A549 (cell line): ENCODE measurements at regions of chr2 and their contacts with region 1.

Region 1: GRCh38 chr2:232668805-232669444 is 28.2 kb upstream of the GIGYF2 start:
- DNase-seq: peak in 1 of 2 experiments; percentile 32
- ATAC-seq: peak; percentile 64 to 77; a peak in 5 of 6 replicates
- H3K4me3 ChIP-seq: no peak overlapping the region
- H3K27ac ChIP-seq: no peak overlapping the region
- H3K4me1 ChIP-seq: peaks cover 10% of the 10 kb centered on the region; the same call in 2 of the 3 replicates
- CTCF ChIP-seq: peak; percentile 28; the same call in 2 of the 3 replicates
- EP300 ChIP-seq: no peak
- POLR2A ChIP-seq: no peak
- RAD21 ChIP-seq: peak; percentile 33 to 49; a peak in 4 of 5 replicates

Region 2: DNA sequence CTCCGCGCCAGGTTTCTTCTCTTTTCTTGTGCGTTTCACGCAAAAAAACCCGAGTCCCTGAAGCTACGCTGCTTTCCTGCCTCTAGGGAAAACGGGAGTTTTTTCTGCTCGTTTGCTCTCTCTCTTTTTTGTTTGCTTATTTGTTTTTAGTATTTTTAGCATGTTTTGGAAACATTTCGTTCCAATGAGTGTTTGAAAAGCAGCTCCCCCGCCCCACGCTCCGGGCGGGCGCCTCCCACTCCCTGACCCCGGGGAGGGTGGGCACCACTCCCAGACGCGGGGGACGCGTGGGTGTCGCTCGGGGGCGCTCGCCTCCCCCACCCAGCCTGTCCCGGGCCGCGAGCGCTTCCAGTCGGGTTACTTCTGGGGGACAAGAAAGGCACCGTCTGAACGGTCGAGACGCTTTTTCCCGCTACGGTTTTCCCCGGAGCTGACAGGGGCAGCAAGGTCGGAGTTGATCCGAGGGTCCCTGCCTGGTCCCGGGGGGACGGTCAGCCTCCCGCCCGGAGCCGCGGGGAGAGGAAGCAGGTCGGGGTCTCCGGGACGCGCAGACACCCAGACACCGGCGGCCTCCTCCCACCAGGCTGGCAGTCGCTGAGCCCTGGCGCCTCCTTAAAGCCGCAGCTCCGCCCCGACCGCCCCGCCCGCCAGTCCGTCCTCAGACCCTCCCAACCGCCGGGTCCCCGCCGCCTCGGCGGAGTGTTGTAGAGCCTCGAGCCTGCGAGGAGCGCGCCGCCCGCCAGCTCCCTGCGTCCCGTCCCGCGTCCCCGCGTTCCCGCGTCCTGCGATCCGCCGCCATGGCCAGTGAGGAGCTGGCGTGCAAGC is 35.8 kb before region 1 on chr2 and contains the start of gene EFHD1:
- CTCF ChIA-PET with region 1: interaction called, 14 read pairs
- POLR2A ChIA-PET with region 1: no interaction called
- DNase-seq: peak; percentile 53 to 73
- ATAC-seq: peak; percentile 88 to 97
- H3K4me3 ChIP-seq: peak within 1 kb of the TSS; percentile 61
- H3K27ac ChIP-seq: peak within 1 kb of the TSS; percentile 53 to 82; a peak in 5 of 6 replicates
- H3K4me1 ChIP-seq: peaks cover 11% of the 10 kb centered on the region; the same call in 2 of the 3 replicates
- CTCF ChIP-seq: no peak
- EP300 ChIP-seq: no peak
- POLR2A ChIP-seq: peak; percentile 20
- RAD21 ChIP-seq: no peak; a peak in 1 of 5 replicates
- polyA plus RNA-seq, gene EFHD1: 2.3 and 2.6 TPM in 2 replicates

Region 3: GRCh38 chr2:232871835-232872736 is 203.2 kb after region 1 on chr2:
- CTCF ChIA-PET with region 1: no interaction called
- POLR2A ChIA-PET with region 1: no interaction called
- DNase-seq: no peak
- ATAC-seq: no peak
- H3K4me3 ChIP-seq: no peak overlapping the region
- H3K27ac ChIP-seq: peak overlapping the region; percentile 26 to 97; a peak in 4 of 6 replicates
- H3K4me1 ChIP-seq: peaks cover 24% of the 10 kb centered on the region
- CTCF ChIP-seq: no peak
- EP300 ChIP-seq: no peak
- POLR2A ChIP-seq: no peak
- RAD21 ChIP-seq: no peak